Endothelial cell of umbilical vein (primary cell): ENCODE measurements at regions of chr6 and their contacts with region 1.

Region 1: GRCh38 chr6:2971420-2972218 is at the start of gene SERPINB6:
- DNase-seq: peak; percentile 76
- H3K4me3 ChIP-seq: peak within 1 kb of the TSS; percentile 15 to 58 (median 54)
- H3K27ac ChIP-seq: peak within 1 kb of the TSS; percentile 51
- H3K4me1 ChIP-seq: peaks cover 8% of the 10 kb centered on the region
- H3K27me3 ChIP-seq: no peaks in the 10 kb centered on the region
- CTCF ChIP-seq: no peak
- POLR2A ChIP-seq: no peak
- total RNA-seq, gene SERPINB6: 145 and 155 TPM in 2 replicates

Region 2: DNA sequence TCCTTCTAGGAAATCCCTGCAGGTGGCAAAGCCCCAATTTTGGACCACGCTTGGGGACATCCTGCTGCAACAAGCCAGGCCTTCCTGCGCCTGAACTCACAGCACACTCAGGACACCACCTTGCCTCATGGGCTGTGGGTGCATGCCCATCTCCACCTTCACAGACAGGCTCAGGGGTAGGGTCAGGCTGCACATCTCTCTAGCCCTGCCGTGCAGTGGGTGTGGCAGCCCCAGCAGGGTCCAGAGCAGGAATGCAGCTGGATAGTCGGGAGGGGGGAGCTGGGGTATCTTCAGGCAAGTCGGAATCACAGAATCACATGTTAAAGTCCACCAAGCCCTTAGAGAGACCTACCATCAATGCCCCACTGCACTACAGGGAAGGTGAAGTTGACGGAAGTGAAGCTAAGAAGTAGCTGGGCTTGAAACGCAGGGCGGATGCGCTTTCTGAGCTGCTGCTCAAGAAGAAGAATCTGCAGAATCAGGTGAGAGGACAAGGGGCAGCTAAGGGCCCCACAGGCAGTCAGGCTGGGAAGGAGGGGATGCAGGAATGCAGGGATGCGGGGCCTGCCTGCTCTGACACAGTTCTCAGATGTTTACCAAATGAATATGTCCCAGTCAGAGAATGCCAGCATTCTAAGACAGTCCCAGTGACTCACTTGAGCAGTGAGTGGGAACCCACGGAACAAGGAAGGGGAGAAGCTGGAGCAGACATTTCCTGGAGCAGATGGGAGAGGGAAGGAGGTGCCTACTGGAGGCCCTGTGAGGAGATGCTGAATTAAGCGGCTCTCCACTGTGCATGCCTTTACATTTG is 11.5 kb before region 1 on chr6:
- CTCF ChIA-PET with region 1: interaction called, 4 read pairs
- POLR2A ChIA-PET with region 1: no interaction called
- dilution Hi-C with region 1: no loop called
- intact Hi-C with region 1: loop called (anchors 1 kb)
- DNase-seq: peak; percentile 76
- H3K4me3 ChIP-seq: no peak overlapping the region
- H3K27ac ChIP-seq: peak overlapping the region; percentile 28
- H3K4me1 ChIP-seq: peaks cover 18% of the 10 kb centered on the region
- H3K27me3 ChIP-seq: no peaks in the 10 kb centered on the region
- CTCF ChIP-seq: no peak
- POLR2A ChIP-seq: no peak